MCF 10A (cell line): ENCODE measurements at regions of chr5 and their contacts with region 1.

Region 1: DNA sequence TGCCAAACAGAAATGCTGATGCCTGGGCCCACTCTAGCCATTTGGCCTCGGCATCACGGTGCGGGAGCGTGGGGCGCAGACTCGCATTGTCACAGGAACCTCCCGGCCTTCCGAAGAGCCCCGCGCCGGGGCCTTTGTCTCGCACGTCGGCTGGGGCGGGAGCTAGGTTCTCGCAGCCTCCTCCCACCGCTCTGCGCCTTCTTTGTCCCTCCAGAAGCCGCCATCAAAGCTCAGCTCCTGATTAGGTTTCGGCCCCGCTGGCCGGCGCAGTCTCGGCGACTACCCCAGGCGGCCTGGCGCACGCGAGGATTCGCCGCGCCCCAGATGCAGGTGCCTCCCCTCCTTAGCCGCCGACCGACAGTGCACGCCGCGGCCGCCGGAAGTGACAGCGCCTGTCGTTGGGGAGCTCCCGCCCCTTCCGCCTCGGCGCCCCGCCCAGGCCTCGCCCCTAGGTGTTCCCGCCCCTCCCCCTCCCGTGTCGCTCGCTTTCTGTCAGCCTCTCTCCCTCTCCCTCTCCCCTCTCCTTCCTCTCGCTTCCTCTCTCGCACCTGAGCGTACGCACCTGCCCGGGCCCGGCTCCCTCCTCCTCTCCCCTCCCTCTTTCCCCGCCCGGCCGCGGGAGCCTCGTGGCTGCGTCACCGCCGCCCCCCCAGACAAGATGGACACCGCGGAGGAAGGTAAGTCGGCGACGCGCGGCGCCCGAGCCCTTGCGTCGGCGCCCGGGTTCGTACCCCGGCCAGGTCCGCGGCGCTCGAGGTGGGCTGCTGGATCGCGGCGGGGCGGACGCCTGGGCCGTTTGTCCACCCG is at the start of gene MARCHF6:
- DNase-seq: peak; percentile 96
- H3K4me3 Mint-ChIP-seq: peak within 1 kb of the TSS; percentile 94
- H3K27ac Mint-ChIP-seq: peak within 1 kb of the TSS; percentile 99
- H3K4me1 Mint-ChIP-seq: peaks cover 19% of the 10 kb centered on the region
- H3K27me3 Mint-ChIP-seq: no peaks in the 10 kb centered on the region
- CTCF ChIP-seq: no peak
- total RNA-seq, gene MARCHF6: 118 and 131 TPM in 2 replicates

Region 2: GRCh38 chr5:10030210-10030831 is 323.1 kb before region 1 on chr5:
- CTCF ChIA-PET with region 1: no interaction called
- POLR2A ChIA-PET with region 1: no interaction called
- intact Hi-C with region 1: no loop called
- DNase-seq: peak; percentile 71
- H3K4me3 Mint-ChIP-seq: no peak overlapping the region
- H3K27ac Mint-ChIP-seq: no peak overlapping the region
- H3K4me1 Mint-ChIP-seq: no peaks in the 10 kb centered on the region
- H3K27me3 Mint-ChIP-seq: no peaks in the 10 kb centered on the region
- CTCF ChIP-seq: peak; percentile 35

Region 3: DNA sequence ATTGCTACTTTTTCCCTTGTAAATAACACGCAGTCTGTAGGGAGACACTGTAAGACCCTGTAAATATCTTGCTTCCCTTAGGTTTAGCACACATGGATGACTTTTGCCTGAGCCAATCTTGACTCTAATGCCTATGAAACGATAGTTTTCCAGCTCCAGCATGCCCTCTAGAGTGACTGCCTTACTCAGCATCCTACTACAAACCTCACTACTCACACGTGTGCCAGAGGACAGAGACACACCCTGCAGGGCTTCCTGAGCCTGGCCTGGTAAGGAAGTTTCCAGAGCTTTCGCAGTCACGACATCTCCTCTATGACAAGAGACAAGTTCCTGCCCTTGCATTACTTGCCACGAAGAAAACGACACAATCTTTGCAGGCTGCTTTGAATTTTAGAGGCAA is 241.9 kb before region 1 on chr5:
- CTCF ChIA-PET with region 1: no interaction called
- POLR2A ChIA-PET with region 1: no interaction called
- intact Hi-C with region 1: no loop called
- DNase-seq: peak; percentile 78
- H3K4me3 Mint-ChIP-seq: no peak overlapping the region
- H3K27ac Mint-ChIP-seq: no peak overlapping the region
- H3K4me1 Mint-ChIP-seq: peaks cover 6% of the 10 kb centered on the region
- H3K27me3 Mint-ChIP-seq: no peaks in the 10 kb centered on the region
- CTCF ChIP-seq: peak; percentile 56

Region 4: GRCh38 chr5:10262121-10262774 is 91.2 kb before region 1 on chr5:
- CTCF ChIA-PET with region 1: no interaction called
- POLR2A ChIA-PET with region 1: interaction called, 14 read pairs
- intact Hi-C with region 1: no loop called
- DNase-seq: no peak
- H3K4me3 Mint-ChIP-seq: no peak overlapping the region
- H3K27ac Mint-ChIP-seq: no peak overlapping the region
- H3K4me1 Mint-ChIP-seq: peaks cover 11% of the 10 kb centered on the region
- H3K27me3 Mint-ChIP-seq: no peaks in the 10 kb centered on the region
- CTCF ChIP-seq: no peak

Region 5: DNA sequence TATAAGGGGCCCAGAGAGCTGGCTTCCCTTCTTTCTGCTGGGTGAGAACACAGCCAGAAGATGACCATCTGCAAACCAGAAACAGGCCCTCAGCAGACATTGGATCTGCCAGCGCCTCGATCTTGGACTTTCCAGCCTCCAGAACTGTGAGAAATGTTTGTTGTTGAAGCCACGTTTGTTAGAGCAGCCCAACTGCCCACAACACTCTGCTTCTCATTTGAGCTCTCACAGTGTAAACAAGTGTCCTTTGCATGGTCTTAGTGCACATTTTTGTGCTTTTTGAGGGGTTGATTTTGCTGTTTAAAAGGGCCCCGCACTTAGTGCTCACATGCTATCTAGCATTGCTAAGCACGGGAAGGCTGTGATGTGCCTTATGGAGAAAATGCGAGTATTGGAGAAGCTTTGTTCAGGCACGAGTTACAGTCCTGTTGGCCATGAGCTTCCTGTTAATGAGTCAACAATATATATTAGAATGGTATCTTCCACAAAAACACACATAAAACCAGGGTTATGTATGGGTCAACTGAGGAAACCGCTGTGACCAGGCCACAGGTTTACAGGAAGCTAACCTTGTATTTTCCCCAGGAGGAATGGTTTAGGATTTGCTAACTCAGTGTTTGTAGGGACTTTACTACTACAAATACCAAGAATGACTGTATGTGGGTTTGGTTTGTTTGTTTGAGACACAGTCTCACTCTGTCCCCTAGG is 57.7 kb before region 1 on chr5:
- CTCF ChIA-PET with region 1: no interaction called
- POLR2A ChIA-PET with region 1: interaction called, 40 read pairs
- intact Hi-C with region 1: no loop called
- DNase-seq: no peak
- H3K4me3 Mint-ChIP-seq: no peak overlapping the region
- H3K27ac Mint-ChIP-seq: no peak overlapping the region
- H3K4me1 Mint-ChIP-seq: peaks cover 24% of the 10 kb centered on the region
- H3K27me3 Mint-ChIP-seq: no peaks in the 10 kb centered on the region
- CTCF ChIP-seq: no peak

Region 6: GRCh38 chr5:10307206-10308148 is 46.0 kb before region 1 on chr5 and contains the start of gene CMBL:
- CTCF ChIA-PET with region 1: interaction called, 8 read pairs
- POLR2A ChIA-PET with region 1: interaction called, 226 read pairs
- intact Hi-C with region 1: loop called (anchors 1 kb)
- DNase-seq: peak; percentile 85
- H3K4me3 Mint-ChIP-seq: peak within 1 kb of the TSS; percentile 85
- H3K27ac Mint-ChIP-seq: peak within 1 kb of the TSS; percentile 86
- H3K4me1 Mint-ChIP-seq: peaks cover 52% of the 10 kb centered on the region
- H3K27me3 Mint-ChIP-seq: no peaks in the 10 kb centered on the region
- CTCF ChIP-seq: no peak
- total RNA-seq, gene CMBL: 17.6 and 24.9 TPM in 2 replicates

Region 7: DNA sequence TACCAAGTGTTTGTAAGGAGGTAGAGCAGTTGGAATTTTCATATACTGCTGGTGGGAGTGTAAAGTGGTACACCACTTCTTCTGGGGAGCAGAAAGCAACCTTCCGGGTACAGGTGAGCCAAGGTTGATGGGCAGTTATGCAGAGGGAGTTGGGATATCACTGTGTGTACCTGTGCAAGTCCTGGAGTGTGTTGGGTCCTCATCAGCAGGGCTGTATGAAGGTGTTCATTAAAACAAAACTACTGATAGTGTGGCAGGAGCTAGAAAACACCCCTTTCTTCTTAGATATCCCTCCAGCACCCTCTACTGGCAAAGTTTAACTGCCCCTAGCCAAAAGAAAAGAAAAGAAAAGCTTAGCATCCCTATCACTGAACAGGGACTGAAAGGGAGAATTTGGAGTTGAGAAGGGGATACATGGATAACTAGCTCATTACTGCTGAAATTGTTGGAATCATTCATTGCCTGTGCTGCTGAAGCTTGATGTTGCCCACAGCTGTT is 10.8 kb after region 1 on chr5:
- CTCF ChIA-PET with region 1: interaction called, 4 read pairs
- POLR2A ChIA-PET with region 1: interaction called, 99 read pairs
- intact Hi-C with region 1: no loop called
- DNase-seq: peak; percentile 43
- H3K4me3 Mint-ChIP-seq: no peak overlapping the region
- H3K27ac Mint-ChIP-seq: no peak overlapping the region
- H3K4me1 Mint-ChIP-seq: peaks cover 37% of the 10 kb centered on the region
- H3K27me3 Mint-ChIP-seq: no peaks in the 10 kb centered on the region
- CTCF ChIP-seq: peak; percentile 9

Region 8: GRCh38 chr5:10387690-10388089 is 34.2 kb after region 1 on chr5:
- CTCF ChIA-PET with region 1: interaction called, 8 read pairs
- POLR2A ChIA-PET with region 1: interaction called, 12 read pairs
- intact Hi-C with region 1: no loop called
- DNase-seq: peak; percentile 76
- H3K4me3 Mint-ChIP-seq: no peak overlapping the region
- H3K27ac Mint-ChIP-seq: no peak overlapping the region
- H3K4me1 Mint-ChIP-seq: no peaks in the 10 kb centered on the region
- H3K27me3 Mint-ChIP-seq: no peaks in the 10 kb centered on the region
- CTCF ChIP-seq: no peak

Region 9: DNA sequence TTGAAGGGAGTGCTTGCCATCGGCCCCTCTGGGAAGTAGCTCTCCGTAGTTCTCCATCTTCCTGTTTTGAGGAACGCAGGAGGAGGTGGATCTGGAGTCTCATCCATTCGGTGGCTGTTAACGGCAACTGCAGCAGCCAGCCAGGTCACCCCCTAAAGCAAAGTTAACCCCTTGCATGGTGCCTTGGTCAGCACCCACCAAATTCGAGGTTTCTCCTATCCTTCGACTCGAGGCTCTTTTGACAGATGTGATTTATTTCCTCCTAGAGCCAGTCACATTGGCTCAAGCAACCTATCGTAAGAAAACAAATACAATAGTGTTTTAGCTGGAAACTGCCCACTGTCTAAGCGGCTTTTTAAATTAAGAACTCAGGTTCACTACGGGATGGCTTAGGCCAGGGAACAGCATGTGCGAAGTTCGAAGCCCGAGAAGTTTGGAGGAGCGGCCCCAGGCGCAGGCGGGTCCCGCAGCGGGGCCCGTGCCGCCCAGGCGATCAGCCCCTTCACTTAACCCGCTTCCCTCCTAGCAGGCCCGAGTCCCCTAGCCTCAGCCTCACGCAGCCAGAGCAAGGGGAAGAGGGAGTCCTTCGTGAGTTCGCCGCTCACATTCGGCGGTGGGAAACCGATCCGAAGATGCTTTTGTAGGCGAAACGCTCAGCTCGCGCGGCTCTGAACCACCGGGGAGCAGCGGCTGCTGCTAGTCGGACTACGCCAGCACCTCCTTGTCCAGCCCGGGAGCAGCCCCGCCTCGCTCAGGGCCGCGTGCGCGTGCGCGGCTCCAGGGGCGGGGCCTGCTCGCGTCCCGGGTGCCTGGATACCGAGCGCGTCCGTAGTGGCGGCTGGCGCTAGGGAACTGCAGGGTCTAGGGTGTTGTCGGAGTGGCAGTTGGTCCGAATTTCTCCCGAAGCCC is 87.9 kb after region 1 on chr5 and contains the start of gene ROPN1L:
- CTCF ChIA-PET with region 1: no interaction called
- POLR2A ChIA-PET with region 1: no interaction called
- intact Hi-C with region 1: no loop called
- DNase-seq: peak; percentile 87
- H3K4me3 Mint-ChIP-seq: peak within 1 kb of the TSS; percentile 74
- H3K27ac Mint-ChIP-seq: no peak within 1 kb of the TSS
- H3K4me1 Mint-ChIP-seq: no peaks in the 10 kb centered on the region
- H3K27me3 Mint-ChIP-seq: no peaks in the 10 kb centered on the region
- CTCF ChIP-seq: no peak
- total RNA-seq, gene ROPN1L: 0.82 TPM in 1 of 2 replicates, not detected in the other

Region 10: DNA sequence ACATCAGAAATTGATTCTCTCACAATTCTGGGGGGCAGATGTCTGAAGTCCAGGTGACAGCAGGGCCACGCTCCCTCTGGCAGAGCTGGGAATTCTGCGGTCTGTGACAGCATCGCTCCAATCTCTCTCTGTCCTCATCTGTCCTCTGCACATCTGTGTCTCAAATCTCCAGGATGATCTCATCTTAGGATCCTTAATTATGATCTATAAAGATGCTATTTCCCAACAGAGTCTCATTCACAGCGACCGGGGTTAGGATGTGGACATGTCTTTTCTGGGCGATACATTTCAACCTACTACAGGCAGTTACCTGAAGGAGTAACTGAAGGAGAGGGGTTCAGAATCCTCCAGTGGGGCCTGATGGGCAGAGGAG is 241.8 kb after region 1 on chr5:
- CTCF ChIA-PET with region 1: no interaction called
- POLR2A ChIA-PET with region 1: no interaction called
- intact Hi-C with region 1: no loop called
- DNase-seq: peak; percentile 43
- H3K4me3 Mint-ChIP-seq: peak overlapping the region; percentile 54
- H3K27ac Mint-ChIP-seq: peak overlapping the region; percentile 94
- H3K4me1 Mint-ChIP-seq: peaks cover 47% of the 10 kb centered on the region
- H3K27me3 Mint-ChIP-seq: no peaks in the 10 kb centered on the region
- CTCF ChIP-seq: no peak